Activated naive CD4-positive, alpha-beta T cell treated with anti-CD3 and anti-CD28 coated beads for 36 hours (primary cell): ENCODE measurements at regions of chr2 and their contacts with region 1.

Region 1: GRCh38 chr2:12293874-12294273 is 422.9 kb upstream of the TRIB2 start:
- DNase-seq: peak; percentile 18
- H3K4me3 Mint-ChIP-seq: no peak overlapping the region
- H3K27ac Mint-ChIP-seq: peak overlapping the region; percentile 75
- H3K4me1 Mint-ChIP-seq: peaks cover 55% of the 10 kb centered on the region
- H3K27me3 Mint-ChIP-seq: peaks cover 6% of the 10 kb centered on the region

Region 2: GRCh38 chr2:12005886-12006681 is 287.8 kb before region 1 on chr2:
- CTCF ChIA-PET with region 1: no interaction called
- intact Hi-C with region 1: loop called (anchors 1 kb)
- DNase-seq: peak; percentile 92
- H3K4me3 Mint-ChIP-seq: no peak overlapping the region
- H3K27ac Mint-ChIP-seq: no peak overlapping the region
- H3K4me1 Mint-ChIP-seq: peaks cover 22% of the 10 kb centered on the region
- H3K27me3 Mint-ChIP-seq: peaks cover 52% of the 10 kb centered on the region

Region 3: DNA sequence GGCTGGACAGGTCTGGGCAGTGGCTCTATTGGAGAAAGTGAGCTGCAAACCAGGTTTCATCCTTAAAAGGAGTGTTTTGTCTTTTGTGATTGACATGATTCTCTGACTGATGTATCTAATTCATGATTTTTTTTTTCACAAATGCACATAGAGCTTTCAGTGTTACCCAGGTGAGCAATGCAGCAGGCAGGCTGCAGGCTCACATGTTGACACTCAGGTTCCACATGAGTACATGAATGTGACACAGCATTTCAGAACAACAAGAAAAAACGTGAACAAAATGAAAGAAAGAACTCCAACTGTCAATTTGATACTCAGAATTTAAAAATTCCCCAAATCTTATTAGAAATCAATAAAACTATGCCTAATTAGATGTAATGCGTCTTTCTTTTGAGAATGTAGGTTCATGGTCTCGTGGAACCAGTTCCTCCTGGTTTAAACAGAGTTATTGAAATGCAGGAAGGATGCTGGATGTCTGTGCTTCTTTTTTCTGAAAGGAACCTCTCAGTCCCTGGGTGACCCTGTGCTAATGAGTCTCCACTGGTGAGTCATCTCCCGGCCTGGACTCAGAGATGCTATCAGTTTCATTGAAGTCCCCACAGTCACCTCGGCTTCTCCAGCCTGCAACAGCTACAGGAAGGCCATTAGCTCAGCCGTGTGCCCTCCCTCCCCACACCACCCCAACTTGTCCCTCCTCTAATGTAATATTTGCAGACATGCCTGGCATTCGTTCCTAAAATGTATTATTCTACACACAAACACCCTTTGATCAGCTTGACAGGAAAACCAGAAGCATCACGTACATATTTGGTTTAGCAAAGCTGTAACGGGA is 117.0 kb before region 1 on chr2:
- CTCF ChIA-PET with region 1: no interaction called
- intact Hi-C with region 1: loop called (anchors 5 kb)
- DNase-seq: peak; percentile 49
- H3K4me3 Mint-ChIP-seq: peak overlapping the region; percentile 11
- H3K27ac Mint-ChIP-seq: no peak overlapping the region
- H3K4me1 Mint-ChIP-seq: peaks cover 40% of the 10 kb centered on the region
- H3K27me3 Mint-ChIP-seq: no peaks in the 10 kb centered on the region

Region 4: DNA sequence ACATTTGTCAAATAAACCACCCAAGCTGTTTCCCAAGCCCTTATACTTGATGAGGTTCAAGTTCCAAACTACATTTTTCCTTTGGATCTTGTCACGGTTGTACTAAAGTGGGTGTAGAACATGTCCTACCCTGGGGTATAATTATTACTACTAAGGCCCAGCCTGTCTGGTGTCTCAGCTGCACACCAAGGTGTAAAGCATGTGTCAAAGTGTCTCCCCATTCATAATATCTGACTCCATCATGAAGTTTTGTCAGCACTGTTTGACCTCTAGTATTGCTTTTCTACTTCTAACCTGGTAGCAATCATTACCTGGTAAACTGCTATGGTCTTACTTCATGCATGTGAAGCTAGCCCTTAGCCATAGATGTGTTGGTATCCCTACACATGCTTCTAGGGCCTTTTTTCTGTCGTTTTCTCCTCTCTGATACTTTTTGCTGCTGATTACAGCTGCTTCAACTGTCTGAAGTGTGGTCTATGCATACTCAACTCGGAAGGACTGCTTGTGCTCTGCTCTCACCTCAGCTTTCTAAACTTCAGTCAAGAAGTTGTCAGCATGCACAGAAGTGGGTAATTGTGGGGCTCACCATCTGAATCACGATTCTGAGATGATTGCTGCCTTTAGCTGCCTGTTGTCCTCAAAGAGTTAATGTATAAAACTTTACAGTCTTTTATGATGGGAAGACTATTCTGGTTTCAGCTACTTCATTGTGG is 22.8 kb before region 1 on chr2:
- CTCF ChIA-PET with region 1: no interaction called
- intact Hi-C with region 1: loop called (anchors 1 kb)
- DNase-seq: peak; percentile 53
- H3K4me3 Mint-ChIP-seq: no peak overlapping the region
- H3K27ac Mint-ChIP-seq: no peak overlapping the region
- H3K4me1 Mint-ChIP-seq: peaks cover 20% of the 10 kb centered on the region
- H3K27me3 Mint-ChIP-seq: no peaks in the 10 kb centered on the region

Region 5: GRCh38 chr2:12430407-12431133 is 136.7 kb after region 1 on chr2:
- CTCF ChIA-PET with region 1: no interaction called
- intact Hi-C with region 1: loop called (anchors 5 kb)
- DNase-seq: peak; percentile 36
- H3K4me3 Mint-ChIP-seq: no peak overlapping the region
- H3K27ac Mint-ChIP-seq: no peak overlapping the region
- H3K4me1 Mint-ChIP-seq: peaks cover 30% of the 10 kb centered on the region
- H3K27me3 Mint-ChIP-seq: no peaks in the 10 kb centered on the region

Region 6: GRCh38 chr2:12501469-12502158 is 207.7 kb after region 1 on chr2:
- CTCF ChIA-PET with region 1: no interaction called
- intact Hi-C with region 1: loop called (anchors 2 kb)
- DNase-seq: peak; percentile 88
- H3K4me3 Mint-ChIP-seq: no peak overlapping the region
- H3K27ac Mint-ChIP-seq: peak overlapping the region; percentile 47
- H3K4me1 Mint-ChIP-seq: peaks cover 91% of the 10 kb centered on the region
- H3K27me3 Mint-ChIP-seq: no peaks in the 10 kb centered on the region